PC-3 (cell line): ENCODE measurements at regions of chr10 and their contacts with region 1.

Region 1: DNA sequence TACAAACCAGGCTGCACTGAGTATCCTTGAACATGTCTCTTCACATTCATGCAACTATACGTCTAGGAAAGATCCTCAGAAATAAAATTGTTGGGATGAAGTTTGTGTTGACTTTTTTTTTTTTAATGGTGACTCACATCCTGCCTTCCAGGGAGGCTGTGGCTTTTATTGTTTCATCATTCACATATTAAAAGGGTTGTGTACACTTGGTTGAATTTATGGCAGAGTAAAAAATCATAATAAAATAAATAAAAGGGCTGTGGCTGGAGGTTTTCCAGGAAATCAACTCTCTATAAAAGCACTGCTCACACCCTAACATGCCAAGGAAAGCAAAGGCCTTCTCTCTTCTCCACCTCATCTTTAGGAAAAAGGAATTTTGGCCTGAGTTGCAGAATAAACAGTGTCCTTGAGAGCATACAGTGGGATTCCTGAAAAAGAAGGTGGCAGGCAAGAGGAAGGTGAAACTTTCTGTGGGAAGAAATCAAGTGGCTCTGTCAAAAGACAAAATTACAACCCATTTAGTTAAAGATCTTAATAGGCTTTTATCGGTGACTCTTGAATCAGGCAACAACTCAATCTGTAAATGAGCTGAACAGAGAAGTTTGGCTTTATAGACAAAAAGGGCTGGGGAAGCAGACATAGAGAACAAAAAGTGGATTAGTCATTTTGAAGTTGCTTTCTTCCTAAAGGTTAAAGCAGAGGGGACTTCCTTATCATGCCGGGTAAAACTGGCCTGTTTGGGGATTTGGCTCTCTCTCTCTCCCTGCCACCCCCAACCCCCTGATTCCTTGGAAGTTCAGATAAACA is 41.6 kb upstream of the FHIP2A start:
- DNase-seq: peak; percentile 91
- ATAC-seq: peak; percentile 94
- H3K4me3 ChIP-seq: no peak overlapping the region
- H3K27ac ChIP-seq: peak overlapping the region; percentile 49
- H3K4me1 ChIP-seq: peaks cover 24% of the 10 kb centered on the region
- H3K27me3 ChIP-seq: no peaks in the 10 kb centered on the region
- CTCF ChIP-seq: no peak

Region 2: GRCh38 chr10:114304017-114304570 is 475.9 kb before region 1 on chr10:
- CTCF ChIA-PET with region 1: no interaction called
- POLR2A ChIA-PET with region 1: no interaction called
- intact Hi-C with region 1: loop called (anchors 10 kb)
- DNase-seq: peak; percentile 87
- ATAC-seq: peak; percentile 59
- H3K4me3 ChIP-seq: peak overlapping the region; percentile 65
- H3K27ac ChIP-seq: no peak overlapping the region
- H3K4me1 ChIP-seq: peaks cover 12% of the 10 kb centered on the region
- H3K27me3 ChIP-seq: no peaks in the 10 kb centered on the region
- CTCF ChIP-seq: peak; percentile 72

Region 3: GRCh38 chr10:114631666-114632417 is 148.2 kb before region 1 on chr10:
- CTCF ChIA-PET with region 1: no interaction called
- POLR2A ChIA-PET with region 1: no interaction called
- intact Hi-C with region 1: loop called (anchors 5 kb)
- DNase-seq: no peak
- ATAC-seq: peak; percentile 25; the same call in 1 of the 2 replicates
- H3K4me3 ChIP-seq: peak overlapping the region; percentile 69
- H3K27ac ChIP-seq: no peak overlapping the region
- H3K4me1 ChIP-seq: peaks cover 44% of the 10 kb centered on the region
- H3K27me3 ChIP-seq: no peaks in the 10 kb centered on the region
- CTCF ChIP-seq: no peak

Region 4: GRCh38 chr10:114714281-114714741 is 65.7 kb before region 1 on chr10:
- CTCF ChIA-PET with region 1: no interaction called
- POLR2A ChIA-PET with region 1: interaction called, 4 read pairs
- intact Hi-C with region 1: loop called (anchors 1 kb)
- DNase-seq: peak; percentile 94
- ATAC-seq: peak; percentile 97
- H3K4me3 ChIP-seq: no peak overlapping the region
- H3K27ac ChIP-seq: peak overlapping the region; percentile 71
- H3K4me1 ChIP-seq: peaks cover 38% of the 10 kb centered on the region
- H3K27me3 ChIP-seq: no peaks in the 10 kb centered on the region
- CTCF ChIP-seq: no peak

Region 5: DNA sequence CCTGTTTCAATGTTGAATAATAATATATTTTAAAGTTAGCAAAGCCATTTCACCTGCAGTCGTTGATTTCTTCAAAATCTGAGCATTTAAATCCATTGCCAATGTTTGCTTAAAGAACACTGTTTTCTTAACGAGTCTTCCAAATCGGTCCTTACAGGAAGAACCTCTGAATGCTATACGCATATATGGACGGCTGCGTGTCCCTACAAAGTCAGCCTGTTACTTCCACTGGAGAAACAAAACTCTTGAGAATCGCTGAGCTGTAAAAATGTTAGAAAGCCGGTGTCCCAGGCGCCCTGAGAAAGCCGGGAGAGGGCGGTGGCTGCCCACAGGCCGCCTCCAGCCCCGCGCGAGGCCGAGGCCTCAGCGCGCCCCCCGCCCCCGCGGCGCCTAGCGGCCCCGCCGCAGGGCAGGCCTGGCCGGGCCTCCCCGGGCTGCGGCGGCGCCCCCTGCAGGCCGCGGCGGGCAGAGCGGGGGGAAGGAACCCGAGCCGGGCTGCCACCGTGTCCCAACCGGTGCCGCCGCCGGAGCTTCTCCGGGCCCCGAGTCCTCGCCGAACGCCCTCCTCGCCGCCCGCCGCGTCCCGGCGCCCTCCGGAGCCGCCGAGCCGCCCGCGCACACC is 41.4 kb after region 1 on chr10 and contains the start of gene FHIP2A:
- CTCF ChIA-PET with region 1: no interaction called
- POLR2A ChIA-PET with region 1: no interaction called
- intact Hi-C with region 1: loop called (anchors 2 kb)
- DNase-seq: peak; percentile 76
- ATAC-seq: peak; percentile 80
- H3K4me3 ChIP-seq: peak within 1 kb of the TSS; percentile 99
- H3K27ac ChIP-seq: peak within 1 kb of the TSS; percentile 79
- H3K4me1 ChIP-seq: peaks cover 25% of the 10 kb centered on the region
- H3K27me3 ChIP-seq: no peaks in the 10 kb centered on the region
- CTCF ChIP-seq: 0 out of 2 replicates have a peak, but pooled peaks have one; percentile 26
- total RNA-seq, gene FHIP2A: 3.7 and 4.6 TPM in 2 replicates

Region 6: DNA sequence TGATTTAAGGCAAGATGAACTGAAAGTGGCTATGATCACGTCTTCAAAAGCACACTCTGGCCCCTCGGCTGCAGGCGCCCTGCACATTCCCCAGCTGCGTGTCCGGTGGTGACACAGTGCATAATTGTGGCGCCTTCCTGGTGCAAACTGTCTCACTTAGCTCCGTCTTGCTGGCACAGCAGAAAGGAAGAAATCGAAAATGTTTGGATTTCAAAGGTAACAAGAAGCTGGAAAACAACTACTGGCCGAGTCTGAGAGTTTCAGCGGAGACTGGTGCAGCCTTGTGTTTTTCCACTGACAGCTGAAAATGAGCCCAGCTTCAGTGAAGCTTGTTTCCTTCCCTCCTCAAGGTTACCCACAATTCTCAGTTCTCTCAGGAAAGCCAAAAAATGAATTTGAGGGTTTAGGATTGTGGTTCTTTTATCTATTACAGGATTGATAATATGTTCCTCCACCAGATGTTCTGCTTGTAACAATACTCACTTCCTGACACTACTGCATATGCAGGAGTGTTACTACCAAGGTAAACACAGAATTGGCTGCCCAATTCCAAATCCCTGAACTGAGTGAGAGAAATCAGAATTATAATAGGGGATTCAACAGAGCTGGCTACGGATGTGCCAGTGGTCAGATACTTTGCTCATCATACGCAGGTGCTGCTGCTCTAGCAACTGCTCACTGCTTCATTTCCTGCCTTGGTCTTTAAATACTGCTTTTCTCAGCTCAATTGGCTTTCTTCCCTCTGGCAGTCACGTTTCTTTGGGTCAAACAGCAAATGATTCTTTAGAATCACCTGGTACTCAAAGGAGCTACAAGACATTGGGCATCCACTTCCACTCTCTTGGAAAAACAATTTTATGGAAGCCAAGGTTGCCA is 221.7 kb after region 1 on chr10:
- CTCF ChIA-PET with region 1: no interaction called
- POLR2A ChIA-PET with region 1: no interaction called
- intact Hi-C with region 1: no loop called
- DNase-seq: no peak
- ATAC-seq: no peak
- H3K4me3 ChIP-seq: no peak overlapping the region
- H3K27ac ChIP-seq: no peak overlapping the region
- H3K4me1 ChIP-seq: no peaks in the 10 kb centered on the region
- H3K27me3 ChIP-seq: no peaks in the 10 kb centered on the region
- CTCF ChIP-seq: no peak